ENCODE measurements at regions of chr17 and their contacts with region 1.

Region 1: GRCh38 chr17:36486204-36487194 is at the start of gene ZNHIT3:
- DNase-seq: peak; percentile 77 to 96
- H3K4me3 ChIP-seq: peak within 1 kb of the TSS; percentile 80 to 99
- H3K27ac ChIP-seq: peak within 1 kb of the TSS; percentile 71 to 91
- H3K4me1 ChIP-seq: peaks cover 5 to 24% of the 10 kb centered on the region in 2 donors
- H3K27me3 ChIP-seq: no peaks in the 10 kb centered on the region
- CTCF ChIP-seq: no peak
- total RNA-seq, gene ZNHIT3: 49.4 TPM

Region 2: DNA sequence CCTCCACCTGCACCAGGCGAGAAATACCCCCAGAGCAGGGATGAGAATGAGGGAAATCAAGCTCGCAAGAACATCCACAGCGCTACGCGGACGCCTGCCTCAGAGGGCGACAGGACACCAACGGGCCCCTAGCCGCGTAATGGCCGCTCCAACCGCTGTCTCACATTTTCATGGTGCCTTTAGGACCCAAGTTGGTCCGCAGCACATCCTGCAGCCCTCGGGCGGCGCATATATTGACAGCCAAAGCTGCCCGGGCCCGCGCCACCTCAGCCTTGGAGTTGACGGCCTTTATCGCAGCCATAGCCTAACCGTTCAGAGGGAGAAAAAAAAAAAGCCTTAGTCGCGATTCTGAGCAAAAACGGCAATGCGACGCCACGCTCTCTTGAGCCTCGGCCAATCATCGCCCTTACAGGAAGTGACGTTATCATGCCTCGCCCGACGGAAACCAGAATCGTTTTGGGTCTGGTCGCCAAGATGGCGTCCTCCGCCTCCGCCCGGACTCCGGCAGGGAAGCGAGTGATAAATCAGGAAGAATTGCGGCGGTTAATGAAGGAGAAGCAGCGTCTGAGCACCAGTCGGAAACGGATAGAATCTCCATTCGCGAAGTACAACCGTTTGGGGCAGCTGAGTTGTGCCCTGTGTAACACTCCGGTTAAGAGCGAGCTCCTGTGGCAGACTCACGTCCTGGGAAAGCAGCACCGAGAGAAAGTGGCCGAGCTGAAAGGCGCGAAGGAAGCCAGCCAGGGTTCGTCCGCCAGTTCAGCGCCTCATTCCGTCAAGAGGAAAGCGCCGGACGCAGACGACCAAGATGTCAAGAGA is 1525.2 kb before region 1 on chr17 and contains the starts of genes CCT6B and ZNF830:
- intact Hi-C with region 1: loop called (anchors 5 kb)
- DNase-seq: peak; percentile 65 to 96
- H3K4me3 ChIP-seq: peak within 1 kb of the TSS; percentile 84
- H3K27ac ChIP-seq: peak within 1 kb of the TSS; percentile 87 to 93
- H3K4me1 ChIP-seq: peaks cover 5 to 10% of the 10 kb centered on the region in 2 donors
- H3K27me3 ChIP-seq: no peaks in the 10 kb centered on the region
- CTCF ChIP-seq: peak in 1 of 3 experiments; percentile 1
- total RNA-seq, gene CCT6B: not detected
- total RNA-seq, gene ZNF830: 1.9 TPM

Region 3: DNA sequence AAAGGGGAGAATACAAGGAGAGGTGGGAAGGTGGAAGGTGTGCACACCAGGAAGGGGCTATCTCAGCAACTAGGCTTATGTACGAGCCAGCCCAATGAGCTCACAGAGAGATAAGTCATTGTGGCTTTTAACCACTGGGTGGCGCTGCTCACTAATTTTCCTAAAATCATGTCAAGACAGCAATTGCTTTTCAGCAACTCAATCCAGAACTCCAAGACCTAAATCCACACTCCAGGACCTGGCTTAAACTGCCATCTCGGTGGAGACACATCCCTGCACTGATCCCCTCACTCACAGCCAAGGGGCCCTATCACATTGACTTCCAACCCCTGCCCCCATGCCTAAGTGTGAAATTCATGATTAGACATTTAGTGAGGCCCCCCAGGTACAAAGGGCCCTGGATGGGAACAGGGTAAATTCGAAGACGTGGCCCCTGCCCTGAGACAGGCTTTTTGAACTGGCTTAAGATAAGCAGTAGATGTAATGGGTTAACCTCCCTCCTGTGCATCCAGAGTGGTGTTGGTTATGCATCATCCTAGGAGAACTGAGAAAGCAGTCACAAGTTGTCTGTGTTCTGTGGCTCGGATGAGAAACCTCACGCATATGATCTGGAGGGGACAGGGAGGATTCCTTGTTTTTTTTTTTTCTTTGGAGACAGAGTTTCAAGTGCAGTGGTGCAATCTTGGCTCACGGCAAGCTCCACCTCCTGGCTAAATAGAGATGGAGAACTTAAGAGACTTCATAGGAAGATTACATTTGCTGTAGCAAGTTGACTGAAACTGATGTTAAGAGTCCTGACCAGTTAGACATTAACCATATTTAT is 516.7 kb before region 1 on chr17:
- intact Hi-C with region 1: loop called (anchors 1 kb)
- DNase-seq: peak in 1 of 2 donors; percentile 84
- H3K4me3 ChIP-seq: no peak overlapping the region
- H3K27ac ChIP-seq: no peak overlapping the region
- H3K4me1 ChIP-seq: no peaks in the 10 kb centered on the region
- H3K27me3 ChIP-seq: no peaks in the 10 kb centered on the region
- CTCF ChIP-seq: peak; percentile 49 to 59 (median 51)

Region 4: GRCh38 chr17:36148559-36149295 is 337.8 kb before region 1 on chr17:
- intact Hi-C with region 1: loop called (anchors 10 kb)
- DNase-seq: peak in 1 of 2 donors; percentile 79
- H3K4me3 ChIP-seq: no peak overlapping the region
- H3K27ac ChIP-seq: no peak overlapping the region
- H3K4me1 ChIP-seq: peaks cover 0 to 4% of the 10 kb centered on the region in 2 donors
- H3K27me3 ChIP-seq: no peaks in the 10 kb centered on the region
- CTCF ChIP-seq: peak; percentile 62 to 91 (median 89)

Measured in ascending aorta (tissue), 2 donors.